PC-9 (cell line): ENCODE measurements at regions of chr3 and their contacts with region 1.

Region 1: DNA sequence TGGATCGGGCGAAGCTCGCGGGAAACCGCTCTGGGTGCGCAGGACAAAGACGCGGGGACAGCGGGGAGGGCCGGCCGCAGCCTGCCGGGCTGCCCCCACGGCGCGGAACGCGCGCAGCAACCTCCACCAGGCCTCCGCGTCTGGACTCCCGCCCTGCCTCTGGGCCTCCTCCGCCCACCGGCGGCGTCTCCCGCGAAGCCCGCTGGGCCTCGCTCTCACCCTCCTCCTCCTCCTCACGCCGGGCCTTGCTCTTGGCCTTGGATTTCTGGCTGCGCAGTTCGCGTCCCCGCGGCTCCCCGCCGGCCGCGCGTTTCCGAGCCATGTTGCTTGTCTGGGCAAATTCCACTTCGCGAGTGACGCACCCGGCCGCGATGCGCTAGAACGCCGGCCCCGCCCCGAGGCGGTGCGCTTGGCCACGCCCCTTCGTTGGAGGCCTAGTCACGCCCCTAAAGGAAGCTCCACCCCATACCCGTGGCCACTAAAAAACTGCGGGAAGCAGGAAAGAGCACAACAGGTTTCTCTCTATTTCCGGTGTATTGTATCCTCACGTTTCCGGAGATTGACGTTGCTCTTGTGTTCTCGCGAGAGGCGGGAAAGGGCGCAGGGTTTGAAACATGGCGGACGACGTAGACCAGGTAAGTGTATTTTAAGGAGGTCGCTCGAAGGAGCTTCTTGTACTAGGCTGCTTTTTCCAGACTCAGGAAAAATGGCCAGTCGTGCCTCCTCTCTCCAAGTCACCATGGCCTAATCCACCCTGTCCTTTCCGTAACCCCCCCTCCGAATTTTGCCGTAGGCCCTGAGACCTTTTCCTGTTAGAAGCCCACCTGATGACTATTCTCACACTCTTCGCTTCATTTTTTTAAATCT is at the starts of genes LSM3 and XPC:
- DNase-seq: peak; percentile 90 to 97
- H3K4me3 ChIP-seq: peak within 1 kb of the TSS; percentile 69
- H3K27ac ChIP-seq: peak within 1 kb of the TSS; percentile 47
- H3K4me1 ChIP-seq: peaks cover 19% of the 10 kb centered on the region
- H3K27me3 ChIP-seq: no peaks in the 10 kb centered on the region
- CTCF ChIP-seq: no peak
- total RNA-seq, gene LSM3: 8.7 and 18.3 TPM in 2 replicates
- total RNA-seq, gene XPC: 27.1 and 28.8 TPM in 2 replicates

Region 2: GRCh38 chr3:14016885-14017475 is 161.5 kb before region 1 on chr3:
- CTCF ChIA-PET with region 1: no interaction called
- POLR2A ChIA-PET with region 1: no interaction called
- intact Hi-C with region 1: loop called (anchors 5 kb)
- DNase-seq: peak; percentile 79 to 88
- H3K4me3 ChIP-seq: no peak overlapping the region
- H3K27ac ChIP-seq: 0 out of 2 replicates have a peak overlapping the region, but pooled peaks have one; percentile 24
- H3K4me1 ChIP-seq: peaks cover 7% of the 10 kb centered on the region; the same call in 1 of the 2 replicates
- H3K27me3 ChIP-seq: no peaks in the 10 kb centered on the region; the same call in 1 of the 2 replicates
- CTCF ChIP-seq: no peak

Region 3: DNA sequence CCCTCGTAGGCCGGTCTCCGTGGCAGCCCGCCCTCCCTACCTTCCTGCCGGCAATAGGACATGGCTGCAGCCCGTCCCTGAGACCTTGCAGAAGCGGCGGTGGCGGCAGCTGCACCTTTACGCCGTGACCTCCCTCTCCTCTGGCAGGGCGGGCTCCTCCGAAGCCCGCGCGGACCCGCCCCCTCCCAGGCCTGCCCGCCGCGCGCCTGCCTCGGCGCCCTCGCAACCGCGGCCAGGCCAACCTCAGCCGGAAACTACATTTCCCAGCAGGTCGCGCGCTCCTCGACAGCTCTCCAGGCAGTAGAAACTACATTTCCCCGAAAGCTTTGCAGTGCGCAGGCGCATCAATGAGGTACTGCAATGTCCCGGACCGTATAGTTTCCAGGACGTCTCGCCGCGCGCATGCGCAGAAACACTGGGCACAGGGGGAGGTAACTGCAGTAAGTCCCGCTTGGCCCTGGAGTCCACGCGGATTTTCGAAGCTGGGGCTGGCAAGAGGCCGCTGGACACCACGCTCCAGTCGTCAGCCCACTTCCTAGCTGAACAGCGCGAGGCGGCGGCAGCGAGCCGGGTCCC is 53.8 kb before region 1 on chr3 and contains the starts of genes CHCHD4 and TMEM43:
- CTCF ChIA-PET with region 1: no interaction called
- POLR2A ChIA-PET with region 1: interaction called, 25 read pairs
- intact Hi-C with region 1: loop called (anchors 1 kb)
- DNase-seq: peak; percentile 96 to 98
- H3K4me3 ChIP-seq: peak within 1 kb of the TSS; percentile 87
- H3K27ac ChIP-seq: peak within 1 kb of the TSS; percentile 69
- H3K4me1 ChIP-seq: peaks cover 24% of the 10 kb centered on the region
- H3K27me3 ChIP-seq: no peaks in the 10 kb centered on the region
- CTCF ChIP-seq: no peak
- total RNA-seq, gene CHCHD4: 14.4 and 17.6 TPM in 2 replicates
- total RNA-seq, gene TMEM43: 62.3 and 64.7 TPM in 2 replicates

Region 4: GRCh38 chr3:14137004-14137403 is 41.5 kb before region 1 on chr3:
- CTCF ChIA-PET with region 1: no interaction called
- POLR2A ChIA-PET with region 1: no interaction called
- intact Hi-C with region 1: loop called (anchors 2 kb)
- DNase-seq: peak; percentile 51 to 83
- H3K4me3 ChIP-seq: no peak overlapping the region
- H3K27ac ChIP-seq: no peak overlapping the region
- H3K4me1 ChIP-seq: peaks cover 14% of the 10 kb centered on the region
- H3K27me3 ChIP-seq: no peaks in the 10 kb centered on the region
- CTCF ChIP-seq: no peak

Region 5: GRCh38 chr3:14144423-14145075 is 33.9 kb before region 1 on chr3:
- CTCF ChIA-PET with region 1: no interaction called
- POLR2A ChIA-PET with region 1: interaction called, 8 read pairs
- intact Hi-C with region 1: loop called (anchors 2 kb)
- DNase-seq: peak; percentile 74 to 96
- H3K4me3 ChIP-seq: peak overlapping the region; percentile 51
- H3K27ac ChIP-seq: peak overlapping the region; percentile 88
- H3K4me1 ChIP-seq: peaks cover 44% of the 10 kb centered on the region
- H3K27me3 ChIP-seq: no peaks in the 10 kb centered on the region
- CTCF ChIP-seq: no peak

Region 6: DNA sequence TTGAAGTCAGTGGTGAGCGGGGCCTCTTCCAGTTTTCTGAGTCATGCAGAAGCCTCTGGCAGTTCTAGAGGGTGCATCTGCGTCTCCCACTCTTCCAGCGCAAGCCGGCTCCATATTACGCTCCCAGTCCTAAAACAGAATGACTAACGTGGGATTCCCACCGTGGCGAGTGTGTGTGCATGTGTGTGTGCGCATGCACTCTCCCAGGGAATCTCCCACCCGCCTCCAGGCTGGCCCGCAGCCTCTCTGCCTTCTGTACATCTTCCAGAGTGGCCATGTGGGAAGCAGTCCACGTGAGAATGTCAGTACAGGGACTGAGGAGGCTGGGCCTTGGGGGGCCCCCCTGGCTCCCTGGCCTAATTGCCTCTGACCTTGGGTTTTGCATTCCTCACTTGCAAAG is 87.9 kb after region 1 on chr3:
- CTCF ChIA-PET with region 1: no interaction called
- POLR2A ChIA-PET with region 1: no interaction called
- intact Hi-C with region 1: no loop called
- DNase-seq: no peak
- H3K4me3 ChIP-seq: no peak overlapping the region
- H3K27ac ChIP-seq: no peak overlapping the region
- H3K4me1 ChIP-seq: peaks cover 64% of the 10 kb centered on the region
- H3K27me3 ChIP-seq: no peaks in the 10 kb centered on the region
- CTCF ChIP-seq: no peak

Region 7: GRCh38 chr3:14651440-14652251 is 473.2 kb after region 1 on chr3 and contains the start of gene CCDC174:
- CTCF ChIA-PET with region 1: no interaction called
- POLR2A ChIA-PET with region 1: interaction called, 4 read pairs
- intact Hi-C with region 1: loop called (anchors 5 kb)
- DNase-seq: peak; percentile 91 to 94
- H3K4me3 ChIP-seq: peak within 1 kb of the TSS; percentile 95
- H3K27ac ChIP-seq: peak within 1 kb of the TSS; percentile 82
- H3K4me1 ChIP-seq: peaks cover 19% of the 10 kb centered on the region
- H3K27me3 ChIP-seq: no peaks in the 10 kb centered on the region
- CTCF ChIP-seq: no peak
- total RNA-seq, gene CCDC174: 14.7 and 14.9 TPM in 2 replicates